Endothelial cell of umbilical vein (primary cell): ENCODE measurements at regions of chr20 and their contacts with region 1.

Region 1: GRCh38 chr20:57654363-57654997 is 34.3 kb upstream of the ZBP1 start:
- DNase-seq: peak; percentile 69
- H3K4me3 ChIP-seq: no peak overlapping the region
- H3K27ac ChIP-seq: no peak overlapping the region
- H3K4me1 ChIP-seq: no peaks in the 10 kb centered on the region
- H3K27me3 ChIP-seq: no peaks in the 10 kb centered on the region
- CTCF ChIP-seq: peak; percentile 82 to 85
- POLR2A ChIP-seq: no peak

Region 2: DNA sequence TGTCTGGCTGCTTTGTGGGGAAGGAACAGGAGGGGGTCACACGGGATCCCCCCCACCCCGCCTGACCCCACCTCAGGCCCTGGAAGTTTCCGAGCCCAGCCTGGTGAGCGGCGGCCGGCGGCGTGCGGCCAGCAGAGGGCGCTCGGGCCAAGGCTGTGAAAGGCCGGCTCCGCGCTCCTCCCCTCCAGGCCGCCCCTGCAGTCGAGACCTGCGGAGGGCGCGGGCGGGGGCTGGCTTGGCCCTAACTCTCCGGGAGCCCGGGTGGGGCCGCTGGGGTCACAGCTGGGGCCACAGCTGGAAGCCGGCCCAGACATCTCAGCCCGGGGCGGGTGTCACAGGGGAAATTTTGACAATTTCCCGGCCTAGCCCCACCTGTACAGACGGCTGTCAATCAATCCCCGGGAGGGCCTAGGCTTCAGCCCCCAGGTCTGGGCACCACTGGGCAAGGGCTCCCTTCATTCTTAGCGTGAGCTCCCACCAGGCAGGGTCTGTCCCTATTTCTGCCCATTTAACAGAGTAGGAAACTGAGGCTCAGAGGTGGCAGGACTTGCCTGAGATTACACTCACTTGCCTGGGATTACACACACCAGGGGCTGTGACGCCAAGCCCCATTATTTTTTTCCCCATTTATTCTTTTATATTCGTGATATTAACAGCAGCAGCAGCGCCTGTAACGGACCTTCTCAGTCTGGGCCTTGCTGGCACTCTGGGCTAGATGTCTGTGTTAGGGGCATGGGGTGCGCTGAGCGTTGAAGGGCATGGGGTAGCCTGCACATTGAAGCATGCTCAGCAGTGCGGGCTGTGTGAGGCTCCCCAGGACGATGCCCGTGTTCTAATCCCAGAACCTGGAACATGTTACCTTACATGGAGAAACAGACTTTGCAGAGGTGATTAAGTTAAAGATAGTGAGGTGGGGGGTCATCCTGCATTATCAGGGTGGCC is 57.2 kb before region 1 on chr20:
- CTCF ChIA-PET with region 1: interaction called, 7 read pairs
- POLR2A ChIA-PET with region 1: no interaction called
- dilution Hi-C with region 1: no loop called
- intact Hi-C with region 1: loop called (anchors 1 kb)
- DNase-seq: peak; percentile 17
- H3K4me3 ChIP-seq: no peak overlapping the region
- H3K27ac ChIP-seq: no peak overlapping the region
- H3K4me1 ChIP-seq: no peaks in the 10 kb centered on the region
- H3K27me3 ChIP-seq: peaks cover 2% of the 10 kb centered on the region in 2 experiments
- CTCF ChIP-seq: peak; percentile 88 to 94
- POLR2A ChIP-seq: no peak

Region 3: GRCh38 chr20:57638173-57638894 is 16.1 kb before region 1 on chr20:
- CTCF ChIA-PET with region 1: interaction called, 11 read pairs
- POLR2A ChIA-PET with region 1: no interaction called
- dilution Hi-C with region 1: no loop called
- intact Hi-C with region 1: no loop called
- DNase-seq: no peak
- H3K4me3 ChIP-seq: no peak overlapping the region
- H3K27ac ChIP-seq: no peak overlapping the region
- H3K4me1 ChIP-seq: no peaks in the 10 kb centered on the region
- H3K27me3 ChIP-seq: peaks cover 16 to 35% of the 10 kb centered on the region in 2 experiments
- CTCF ChIP-seq: no peak
- POLR2A ChIP-seq: no peak

Region 4: DNA sequence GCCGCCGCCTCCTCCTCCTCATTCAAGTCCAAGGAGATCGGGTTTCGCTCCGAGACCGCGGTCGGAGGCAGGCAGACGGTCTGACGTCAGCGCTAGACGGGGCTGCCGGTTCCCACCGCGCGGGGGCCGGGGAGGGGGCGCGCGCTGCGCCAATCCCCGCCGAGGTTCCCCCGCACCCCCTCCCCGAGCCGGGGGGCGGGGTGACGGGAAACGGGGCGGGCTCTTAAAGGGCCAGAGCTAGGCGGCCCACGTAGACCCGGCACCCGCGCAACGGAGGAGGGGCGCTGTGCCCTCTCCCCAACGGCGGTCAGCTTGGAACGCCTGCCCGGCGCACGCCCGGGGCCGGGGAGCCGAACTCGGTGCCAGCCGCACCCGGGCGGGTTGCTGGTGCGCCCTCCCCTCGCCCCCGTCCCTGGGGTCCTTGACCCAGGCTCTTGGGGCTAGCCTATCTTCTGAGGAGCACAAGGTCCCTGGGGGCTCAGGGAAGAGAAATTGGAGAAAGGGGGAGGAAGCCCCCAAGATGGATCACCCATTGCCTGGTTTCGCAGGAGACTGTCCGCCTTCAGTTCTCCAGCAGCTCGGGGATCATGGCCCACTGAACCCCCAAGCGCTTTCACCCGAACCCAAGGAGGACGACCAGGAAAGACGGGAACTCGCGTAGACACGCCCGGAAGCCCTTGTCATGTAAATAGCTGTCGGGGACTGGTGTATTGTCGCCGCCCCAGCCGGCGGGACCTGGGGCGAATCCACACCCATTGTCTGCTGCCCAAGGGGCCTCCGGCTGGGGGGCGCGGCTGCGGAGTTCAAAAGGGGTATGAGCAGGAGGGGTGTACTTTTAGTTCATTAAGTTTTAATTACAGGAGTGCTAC is 55.7 kb after region 1 on chr20 and contains the start of gene PMEPA1:
- CTCF ChIA-PET with region 1: interaction called, 4 read pairs
- POLR2A ChIA-PET with region 1: no interaction called
- dilution Hi-C with region 1: no loop called
- intact Hi-C with region 1: loop called (anchors 1 kb)
- DNase-seq: peak; percentile 96
- H3K4me3 ChIP-seq: peak within 1 kb of the TSS; percentile 79 to 88 (median 81)
- H3K27ac ChIP-seq: peak within 1 kb of the TSS; percentile 83
- H3K4me1 ChIP-seq: peaks cover 14% of the 10 kb centered on the region
- H3K27me3 ChIP-seq: no peaks in the 10 kb centered on the region
- CTCF ChIP-seq: peak in 1 of 2 donors; percentile 15
- POLR2A ChIP-seq: no peak
- total RNA-seq, gene PMEPA1: 31.6 and 47.1 TPM in 2 replicates

Region 5: DNA sequence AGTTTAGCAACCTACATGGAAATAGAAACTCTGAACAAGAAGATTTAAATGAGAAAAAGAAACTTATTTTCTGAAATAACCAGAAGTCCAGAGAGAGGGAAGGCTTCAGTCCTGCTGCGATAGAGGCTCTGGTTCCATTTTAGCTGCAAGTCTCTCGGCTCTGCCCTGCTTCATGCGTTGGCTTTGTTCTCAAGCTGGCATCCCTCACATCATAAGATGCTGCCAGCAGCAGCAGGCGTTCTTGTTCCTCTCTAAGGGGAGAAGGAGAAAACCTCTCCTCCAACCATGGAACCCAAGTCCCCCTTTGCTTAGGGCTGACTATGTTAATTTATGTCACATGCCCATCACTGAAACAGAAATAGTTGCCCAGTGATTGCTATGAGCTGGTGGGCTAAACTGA is 101.7 kb after region 1 on chr20:
- CTCF ChIA-PET with region 1: no interaction called
- POLR2A ChIA-PET with region 1: no interaction called
- dilution Hi-C with region 1: no loop called
- intact Hi-C with region 1: no loop called
- DNase-seq: no peak
- H3K4me3 ChIP-seq: no peak overlapping the region
- H3K27ac ChIP-seq: no peak overlapping the region
- H3K4me1 ChIP-seq: no peaks in the 10 kb centered on the region
- H3K27me3 ChIP-seq: peaks cover 10 to 21% of the 10 kb centered on the region in 2 experiments
- CTCF ChIP-seq: no peak
- POLR2A ChIP-seq: no peak

Region 6: GRCh38 chr20:58028123-58028522 is 373.6 kb after region 1 on chr20:
- CTCF ChIA-PET with region 1: interaction called, 7 read pairs
- POLR2A ChIA-PET with region 1: no interaction called
- dilution Hi-C with region 1: no loop called
- intact Hi-C with region 1: loop called (anchors 1 kb)
- DNase-seq: no peak
- H3K4me3 ChIP-seq: no peak overlapping the region
- H3K27ac ChIP-seq: no peak overlapping the region
- H3K4me1 ChIP-seq: no peaks in the 10 kb centered on the region
- H3K27me3 ChIP-seq: peaks cover 0 to 1% of the 10 kb centered on the region in 2 experiments
- CTCF ChIP-seq: peak; percentile 4 to 18
- POLR2A ChIP-seq: no peak

Region 7: DNA sequence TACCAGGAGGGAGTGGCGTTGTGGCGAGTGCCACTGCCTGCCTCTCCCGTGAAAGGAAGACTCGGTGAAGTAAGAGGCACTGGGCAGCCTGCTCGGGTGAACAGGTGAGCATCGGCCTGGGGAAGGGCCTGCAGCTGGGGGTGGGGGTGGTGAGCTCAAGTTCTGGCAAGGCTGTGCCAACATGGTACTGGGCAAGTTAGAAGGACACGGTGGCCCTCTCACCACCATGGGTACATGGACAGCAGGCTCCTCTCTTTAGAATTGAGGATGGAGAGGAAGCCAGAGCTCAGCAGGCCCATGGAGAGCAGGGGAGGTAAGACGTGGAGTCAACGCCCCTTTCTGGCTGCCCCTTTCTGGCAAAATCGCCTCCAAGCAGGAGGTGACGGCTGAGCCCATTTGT is 438.4 kb after region 1 on chr20:
- CTCF ChIA-PET with region 1: interaction called, 89 read pairs
- POLR2A ChIA-PET with region 1: no interaction called
- dilution Hi-C with region 1: loop called (anchors 25 kb)
- intact Hi-C with region 1: no loop called
- DNase-seq: no peak
- H3K4me3 ChIP-seq: no peak overlapping the region
- H3K27ac ChIP-seq: no peak overlapping the region
- H3K4me1 ChIP-seq: no peaks in the 10 kb centered on the region
- H3K27me3 ChIP-seq: peaks cover 0 to 5% of the 10 kb centered on the region in 2 experiments
- CTCF ChIP-seq: no peak
- POLR2A ChIP-seq: no peak

Region 8: GRCh38 chr20:58209652-58210397 is 555.3 kb after region 1 on chr20:
- CTCF ChIA-PET with region 1: interaction called, 3 read pairs
- POLR2A ChIA-PET with region 1: no interaction called
- dilution Hi-C with region 1: no loop called
- intact Hi-C with region 1: loop called (anchors 1 kb)
- DNase-seq: peak; percentile 70
- H3K4me3 ChIP-seq: no peak overlapping the region
- H3K27ac ChIP-seq: no peak overlapping the region
- H3K4me1 ChIP-seq: no peaks in the 10 kb centered on the region
- H3K27me3 ChIP-seq: no peaks in the 10 kb centered on the region
- CTCF ChIP-seq: peak; percentile 100
- POLR2A ChIP-seq: no peak